Activated CD4-positive, alpha-beta T cell treated with anti-CD3 and anti-CD28 coated beads for 36 hours (primary cell): ENCODE measurements at regions of chr6 and their contacts with region 1.

Region 1: GRCh38 chr6:63764318-63764916 is 128.8 kb downstream of the PHF3 start:
- DNase-seq: no peak
- ATAC-seq: no peak
- H3K4me3 Mint-ChIP-seq: no peak overlapping the region
- H3K27ac Mint-ChIP-seq: no peak overlapping the region
- H3K4me1 Mint-ChIP-seq: no peaks in the 10 kb centered on the region
- H3K27me3 Mint-ChIP-seq: peaks cover 5% of the 10 kb centered on the region

Region 2: DNA sequence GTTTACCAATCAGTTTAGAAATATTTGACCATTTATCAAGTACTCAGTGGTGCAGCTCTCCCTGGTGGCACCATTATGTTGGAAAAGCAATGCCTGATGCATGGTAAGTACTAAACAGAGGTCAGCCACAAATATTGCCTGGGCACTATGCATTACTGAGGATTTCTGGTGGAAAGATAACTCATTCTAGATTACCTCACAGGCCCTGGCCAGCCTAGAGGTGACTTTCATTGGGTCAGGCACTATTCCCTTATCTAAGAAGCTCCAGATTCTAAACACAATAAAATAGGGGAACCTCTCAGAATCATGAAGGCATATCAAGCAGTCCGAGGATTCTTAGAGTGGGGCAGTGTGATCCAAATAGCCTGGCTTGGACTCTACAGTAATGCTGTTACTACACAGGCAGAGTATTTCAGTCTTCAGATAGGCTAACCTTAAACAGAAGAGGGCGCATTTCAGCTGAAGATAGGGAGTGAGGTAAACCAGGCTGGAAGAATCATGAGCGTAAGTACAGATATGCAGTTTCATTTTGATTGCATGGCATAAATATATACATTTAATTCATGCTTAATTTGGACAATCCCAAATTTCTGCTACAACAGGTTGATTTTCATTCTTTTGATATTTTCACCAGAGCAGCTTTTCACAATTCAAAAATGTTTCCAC is 456.7 kb before region 1 on chr6:
- CTCF ChIA-PET with region 1: interaction called, 6 read pairs
- POLR2A ChIA-PET with region 1: no interaction called
- intact Hi-C with region 1: loop called in 1 of 2 experiments (anchors 5 kb)
- DNase-seq: no peak
- ATAC-seq: no peak
- H3K4me3 Mint-ChIP-seq: no peak overlapping the region
- H3K27ac Mint-ChIP-seq: no peak overlapping the region
- H3K4me1 Mint-ChIP-seq: no peaks in the 10 kb centered on the region
- H3K27me3 Mint-ChIP-seq: peaks cover 3% of the 10 kb centered on the region

Region 3: DNA sequence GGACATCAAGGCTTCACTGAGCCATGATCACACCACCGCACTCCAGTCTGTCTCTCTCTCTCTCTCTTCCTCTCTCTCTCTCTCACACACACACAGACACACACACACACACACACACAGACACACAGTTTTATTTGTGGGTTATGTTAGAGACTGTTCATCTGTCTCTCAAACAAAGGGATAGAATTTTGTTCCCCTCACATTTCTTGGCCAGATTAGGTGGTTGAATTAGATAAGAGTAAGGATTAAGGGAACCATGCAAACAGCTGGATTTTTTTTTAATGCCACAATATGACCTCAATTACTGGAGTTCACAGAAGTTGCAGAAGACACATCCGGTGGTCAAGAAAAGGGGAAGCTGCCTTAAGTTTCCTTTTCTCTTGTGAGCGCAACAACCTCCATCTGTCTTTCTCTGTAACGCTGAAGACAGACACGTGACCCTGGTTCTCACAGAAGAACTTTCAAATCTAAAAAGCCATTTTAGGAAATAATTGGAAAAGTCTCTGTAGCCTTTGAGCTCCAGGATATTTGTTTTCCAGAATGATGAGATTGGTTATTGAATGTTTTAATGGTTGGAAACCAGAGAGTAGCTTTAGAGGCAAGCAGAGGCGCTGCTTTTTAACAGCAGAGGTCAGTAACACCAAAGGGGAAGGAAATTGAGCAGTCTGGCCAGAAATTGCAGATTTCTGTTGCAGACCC is 411.7 kb before region 1 on chr6:
- CTCF ChIA-PET with region 1: interaction called, 10 read pairs
- POLR2A ChIA-PET with region 1: no interaction called
- intact Hi-C with region 1: loop called (anchors 1 to 2 kb)
- DNase-seq: no peak
- ATAC-seq: no peak
- H3K4me3 Mint-ChIP-seq: no peak overlapping the region
- H3K27ac Mint-ChIP-seq: no peak overlapping the region
- H3K4me1 Mint-ChIP-seq: peaks cover 6% of the 10 kb centered on the region
- H3K27me3 Mint-ChIP-seq: peaks cover 13% of the 10 kb centered on the region

Region 4: DNA sequence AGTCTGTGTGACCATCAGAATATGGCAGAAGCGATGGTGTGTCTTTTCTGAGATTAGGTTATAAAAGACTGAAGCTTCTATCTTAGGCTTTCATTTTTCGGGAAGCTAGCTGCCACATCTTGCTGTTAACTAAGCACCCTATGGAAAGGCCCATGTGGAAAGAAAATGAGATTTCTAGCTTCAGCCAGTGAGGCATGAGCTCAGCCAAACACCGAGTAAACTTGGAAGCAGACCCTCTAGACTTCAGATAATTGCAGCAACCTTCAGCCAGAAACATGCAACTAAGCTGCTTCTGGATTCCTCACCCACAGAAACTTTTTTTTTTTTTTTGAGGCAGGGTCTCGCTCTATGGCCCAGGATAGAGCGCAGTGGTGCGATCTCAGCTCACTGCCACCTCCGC is 171.5 kb before region 1 on chr6:
- CTCF ChIA-PET with region 1: interaction called, 127 read pairs
- POLR2A ChIA-PET with region 1: no interaction called
- intact Hi-C with region 1: loop called (anchors 1 kb)
- DNase-seq: no peak
- ATAC-seq: no peak
- H3K4me3 Mint-ChIP-seq: no peak overlapping the region
- H3K27ac Mint-ChIP-seq: no peak overlapping the region
- H3K4me1 Mint-ChIP-seq: peaks cover 2% of the 10 kb centered on the region
- H3K27me3 Mint-ChIP-seq: peaks cover 6% of the 10 kb centered on the region

Region 5: GRCh38 chr6:64000873-64001491 is 236.6 kb after region 1 on chr6:
- CTCF ChIA-PET with region 1: no interaction called
- POLR2A ChIA-PET with region 1: no interaction called
- intact Hi-C with region 1: no loop called
- DNase-seq: no peak
- ATAC-seq: no peak
- H3K4me3 Mint-ChIP-seq: no peak overlapping the region
- H3K27ac Mint-ChIP-seq: no peak overlapping the region
- H3K4me1 Mint-ChIP-seq: no peaks in the 10 kb centered on the region
- H3K27me3 Mint-ChIP-seq: no peaks in the 10 kb centered on the region